CD4-positive, alpha-beta memory T cell (primary cell): ENCODE measurements at regions of chr7 and their contacts with region 1.

Region 1: GRCh38 chr7:123534383-123535260 is at the start of gene IQUB:
- DNase-seq: peak; percentile 89 to 93 (median 91)
- H3K4me3 ChIP-seq: peak within 1 kb of the TSS; percentile 73 to 79
- H3K4me3 Mint-ChIP-seq: peak within 1 kb of the TSS; percentile 73 to 95 (median 90)
- H3K27ac ChIP-seq: peak within 1 kb of the TSS; percentile 60
- H3K27ac Mint-ChIP-seq: peak within 1 kb of the TSS; percentile 72 to 96 (median 91)
- H3K4me1 ChIP-seq: peaks cover 26% of the 10 kb centered on the region
- H3K4me1 Mint-ChIP-seq: peaks cover 11 to 29% (median 25%) of the 10 kb centered on the region in 4 donors
- H3K27me3 ChIP-seq: peaks cover 6% of the 10 kb centered on the region
- H3K27me3 Mint-ChIP-seq: peaks cover 6 to 10% of the 10 kb centered on the region in 2 donors
- total RNA-seq, gene IQUB: 0.14 to 0.49 TPM

Region 2: GRCh38 chr7:123557398-123558288 is 23.0 kb after region 1 on chr7 and contains the start of gene NDUFA5:
- CTCF ChIA-PET with region 1: interaction called, 24 read pairs
- POLR2A ChIA-PET with region 1: interaction called, 34 read pairs
- intact Hi-C with region 1: loop called (anchors 1 kb)
- DNase-seq: peak; percentile 97 to 99 (median 98)
- H3K4me3 ChIP-seq: peak within 1 kb of the TSS; percentile 61 to 78
- H3K4me3 Mint-ChIP-seq: no peak within 1 kb of the TSS
- H3K27ac ChIP-seq: peak within 1 kb of the TSS; percentile 78
- H3K27ac Mint-ChIP-seq: peak within 1 kb of the TSS in 1 of 7 donors; percentile 45
- H3K4me1 ChIP-seq: peaks cover 43% of the 10 kb centered on the region
- H3K4me1 Mint-ChIP-seq: peaks cover 6 to 17% (median 9%) of the 10 kb centered on the region in 4 donors
- H3K27me3 ChIP-seq: no peaks in the 10 kb centered on the region
- H3K27me3 Mint-ChIP-seq: no peaks in the 10 kb centered on the region
- total RNA-seq, gene NDUFA5: 62.7 to 64.6 TPM

Region 3: DNA sequence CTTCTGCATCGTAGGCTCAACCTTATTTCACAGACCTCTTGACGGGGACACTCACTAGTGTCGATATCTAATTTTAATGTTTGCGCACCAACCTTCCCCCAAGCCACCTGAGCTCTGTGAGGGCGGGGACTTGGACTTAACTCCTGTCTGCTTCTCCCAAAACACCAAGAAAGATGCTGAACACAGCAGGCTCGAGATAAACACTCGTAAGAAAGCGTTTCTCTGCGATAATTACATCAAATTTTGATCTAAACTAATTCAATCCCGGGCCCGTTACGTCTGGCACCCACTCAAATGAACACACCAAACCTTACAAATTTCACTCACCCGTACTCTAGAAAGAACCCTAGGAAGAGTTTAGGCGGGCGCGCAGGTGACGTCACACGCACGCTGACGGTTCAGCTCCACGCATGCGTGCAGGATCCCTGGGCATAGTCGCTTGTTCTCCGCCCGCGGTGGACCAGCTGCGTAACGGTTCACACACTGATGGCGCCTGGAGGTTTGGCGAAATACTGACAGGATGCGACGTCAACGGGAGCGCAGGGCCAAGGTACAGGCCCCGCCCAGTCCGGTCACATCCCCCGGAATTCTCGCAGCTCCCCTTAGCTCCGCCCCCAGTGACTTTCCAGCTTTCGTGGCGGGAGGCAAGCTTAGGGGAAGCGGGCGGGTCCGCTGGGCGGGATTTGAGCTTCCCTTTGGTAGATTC is 1395.0 kb after region 1 on chr7 and contains the start of gene POT1:
- CTCF ChIA-PET with region 1: no interaction called
- POLR2A ChIA-PET with region 1: no interaction called
- intact Hi-C with region 1: loop called (anchors 10 kb)
- DNase-seq: peak; percentile 92 to 97 (median 95)
- H3K4me3 ChIP-seq: peak within 1 kb of the TSS; percentile 77 to 91
- H3K4me3 Mint-ChIP-seq: peak within 1 kb of the TSS; percentile 90 to 99 (median 96)
- H3K27ac ChIP-seq: peak within 1 kb of the TSS; percentile 77
- H3K27ac Mint-ChIP-seq: peak within 1 kb of the TSS; percentile 89 to 99 (median 98)
- H3K4me1 ChIP-seq: peaks cover 18% of the 10 kb centered on the region
- H3K4me1 Mint-ChIP-seq: peaks cover 27 to 52% (median 41%) of the 10 kb centered on the region in 4 donors
- H3K27me3 ChIP-seq: no peaks in the 10 kb centered on the region
- H3K27me3 Mint-ChIP-seq: no peaks in the 10 kb centered on the region
- total RNA-seq, gene POT1: 23.5 to 24.1 TPM